ENCODE measurements at regions of chr2 and their contacts with region 1.

Region 1: DNA sequence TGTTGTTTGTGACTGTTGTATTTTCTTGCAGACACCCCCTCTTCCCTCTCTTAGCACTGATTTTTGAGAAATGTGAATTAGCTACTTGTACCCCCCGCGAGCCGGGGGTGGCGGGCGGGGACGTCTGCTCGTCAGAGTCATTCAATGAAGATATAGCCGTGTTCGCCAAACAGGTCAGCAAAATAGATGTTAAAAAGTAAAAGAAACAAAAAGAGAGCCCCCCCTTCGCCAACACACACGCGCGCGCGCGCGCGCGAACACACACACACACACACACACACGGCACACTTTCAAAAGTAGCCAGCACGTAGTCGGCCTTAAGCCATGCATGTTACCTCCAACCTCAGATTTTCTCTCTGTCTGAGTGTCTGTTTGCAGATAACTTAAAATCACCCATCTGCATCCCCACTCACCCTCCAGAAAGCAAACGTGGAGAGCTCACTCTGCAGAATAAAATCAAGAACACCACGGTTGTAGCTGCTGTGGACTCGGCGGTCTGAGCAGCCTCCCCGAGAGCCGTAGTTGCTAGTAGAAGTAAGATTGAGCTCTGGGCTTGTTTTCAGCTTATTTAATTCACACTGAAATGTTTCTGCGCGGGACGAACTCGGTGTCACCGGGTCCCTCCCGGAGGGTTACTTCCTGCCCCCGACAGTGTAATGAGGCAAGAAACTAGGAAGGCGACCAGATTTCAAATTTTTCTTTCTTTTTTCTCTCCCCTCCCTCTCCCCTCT is 5.1 kb downstream of the MEIS1 start:
- DNase-seq: no peak
- ATAC-seq: no peak
- H3K4me3 ChIP-seq: peak overlapping the region; percentile 99
- H3K27ac ChIP-seq: peak overlapping the region; percentile 100
- H3K4me1 ChIP-seq: peaks cover 2% of the 10 kb centered on the region; the same call in 1 of the 2 replicates
- H3K27me3 ChIP-seq: no peaks in the 10 kb centered on the region
- CTCF ChIP-seq: no peak
- POLR2A ChIP-seq: no peak
- RAD21 ChIP-seq: no peak

Region 2: DNA sequence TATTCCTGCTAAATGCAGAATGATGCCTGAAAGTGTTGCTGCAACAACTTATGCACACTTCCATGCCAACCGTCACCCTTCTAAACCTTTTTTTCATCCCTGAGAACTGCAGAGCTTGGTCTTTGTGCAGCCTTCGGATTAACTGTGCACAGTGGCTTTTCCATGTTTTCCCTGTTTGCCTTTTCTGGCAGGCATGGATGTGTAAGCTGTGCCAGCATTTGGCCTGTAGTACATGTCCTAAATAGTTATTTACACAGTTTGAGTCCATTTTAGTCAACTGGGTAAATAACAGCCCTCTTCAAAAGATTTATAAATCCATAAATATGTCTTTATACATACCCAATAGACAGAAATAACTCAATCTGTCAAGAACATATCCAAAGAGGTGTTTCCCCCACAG is 26.5 kb after region 1 on chr2:
- CTCF ChIA-PET with region 1: no interaction called
- POLR2A ChIA-PET with region 1: interaction called, 11 read pairs
- dilution Hi-C with region 1: no loop called
- in situ Hi-C with region 1: no loop called
- intact Hi-C with region 1: no loop called
- DNase-seq: no peak
- ATAC-seq: no peak
- H3K4me3 ChIP-seq: no peak overlapping the region
- H3K27ac ChIP-seq: no peak overlapping the region
- H3K4me1 ChIP-seq: peaks cover 27% of the 10 kb centered on the region
- H3K27me3 ChIP-seq: no peaks in the 10 kb centered on the region
- CTCF ChIP-seq: no peak
- POLR2A ChIP-seq: no peak
- RAD21 ChIP-seq: no peak

Measured in IMR-90 (cell line).